Activated CD8-positive, alpha-beta memory T cell treated with anti-CD3 and anti-CD28 coated beads, Interleukin-2, amount 10 ng/mL, durations not matched to agents 7 days and 5 days (primary cell): ENCODE measurements at regions of chr12 and their contacts with region 1.

Region 1: DNA sequence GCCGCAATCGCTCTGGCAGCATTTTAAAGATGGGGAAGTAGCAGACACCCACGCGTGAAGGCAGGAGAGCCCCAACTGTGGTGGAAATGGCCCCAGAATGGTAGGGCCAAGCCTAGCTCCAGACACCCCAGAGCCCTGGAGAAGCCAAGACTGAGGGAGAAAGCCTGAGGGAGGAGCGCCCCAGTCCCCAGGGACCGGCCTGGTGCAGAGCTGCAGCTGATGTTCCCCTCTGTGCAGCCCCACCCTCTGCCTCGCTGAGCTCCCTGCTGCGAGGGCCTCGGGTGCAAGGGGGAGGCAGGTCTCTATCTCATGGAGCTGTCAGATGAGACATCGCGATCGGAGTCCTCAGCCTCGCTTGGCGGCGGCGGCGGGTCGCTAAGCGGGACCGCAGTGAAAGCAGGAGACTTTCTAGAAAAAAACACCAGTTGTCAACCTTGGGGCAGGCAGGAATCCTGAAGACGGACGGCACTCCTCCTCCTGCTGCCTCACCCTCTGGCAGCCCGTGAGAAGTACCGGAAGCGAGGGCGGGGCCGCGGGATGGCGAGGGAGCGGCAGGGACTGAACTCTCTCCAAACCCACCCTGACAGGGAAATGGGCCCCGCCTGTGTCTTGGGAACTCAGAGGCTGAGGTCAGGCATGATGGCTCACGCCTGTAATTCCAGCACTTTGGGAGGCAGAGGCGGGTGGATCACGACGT is 6.0 kb downstream of the GAPDH start:
- DNase-seq: peak; percentile 64
- ATAC-seq: peak; percentile 28
- H3K4me3 Mint-ChIP-seq: peak overlapping the region; percentile 26
- H3K27ac Mint-ChIP-seq: peak overlapping the region; percentile 99
- H3K4me1 Mint-ChIP-seq: peaks cover 54% of the 10 kb centered on the region
- H3K27me3 Mint-ChIP-seq: no peaks in the 10 kb centered on the region

Region 2: DNA sequence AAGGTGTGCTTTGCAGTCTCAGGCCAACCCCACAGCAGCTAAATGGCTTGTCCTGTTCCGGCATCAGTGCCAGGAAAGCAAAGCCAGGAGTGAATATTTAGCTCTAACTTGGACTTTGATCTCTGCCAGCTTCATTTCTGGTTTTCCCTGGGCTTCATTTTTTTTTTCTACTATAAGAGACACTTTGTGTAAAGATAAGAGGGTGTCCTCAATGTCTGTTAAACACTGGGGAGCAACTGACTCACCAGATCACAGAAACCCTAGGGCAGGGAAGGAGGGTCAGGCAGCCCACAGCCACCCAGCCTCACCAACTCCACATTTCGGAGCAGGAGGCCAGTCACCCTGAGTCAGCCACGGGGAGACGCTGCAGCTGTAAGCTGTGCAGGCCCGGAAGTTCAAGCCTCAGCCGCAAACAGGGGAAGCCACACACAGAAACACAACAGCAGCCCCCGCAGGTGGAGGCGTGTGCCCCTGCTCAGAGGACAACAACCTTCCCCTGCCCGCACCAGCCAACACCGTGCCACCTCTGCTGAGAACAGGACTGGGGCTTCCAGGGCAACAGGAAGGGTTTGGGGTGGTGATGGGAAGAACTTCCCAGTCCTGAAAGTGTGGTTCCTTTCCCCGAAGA is 204.8 kb before region 1 on chr12:
- CTCF ChIA-PET with region 1: interaction called, 11 read pairs
- DNase-seq: peak; percentile 95
- ATAC-seq: peak; percentile 62
- H3K4me3 Mint-ChIP-seq: no peak overlapping the region
- H3K27ac Mint-ChIP-seq: no peak overlapping the region
- H3K4me1 Mint-ChIP-seq: peaks cover 53% of the 10 kb centered on the region
- H3K27me3 Mint-ChIP-seq: no peaks in the 10 kb centered on the region

Region 3: DNA sequence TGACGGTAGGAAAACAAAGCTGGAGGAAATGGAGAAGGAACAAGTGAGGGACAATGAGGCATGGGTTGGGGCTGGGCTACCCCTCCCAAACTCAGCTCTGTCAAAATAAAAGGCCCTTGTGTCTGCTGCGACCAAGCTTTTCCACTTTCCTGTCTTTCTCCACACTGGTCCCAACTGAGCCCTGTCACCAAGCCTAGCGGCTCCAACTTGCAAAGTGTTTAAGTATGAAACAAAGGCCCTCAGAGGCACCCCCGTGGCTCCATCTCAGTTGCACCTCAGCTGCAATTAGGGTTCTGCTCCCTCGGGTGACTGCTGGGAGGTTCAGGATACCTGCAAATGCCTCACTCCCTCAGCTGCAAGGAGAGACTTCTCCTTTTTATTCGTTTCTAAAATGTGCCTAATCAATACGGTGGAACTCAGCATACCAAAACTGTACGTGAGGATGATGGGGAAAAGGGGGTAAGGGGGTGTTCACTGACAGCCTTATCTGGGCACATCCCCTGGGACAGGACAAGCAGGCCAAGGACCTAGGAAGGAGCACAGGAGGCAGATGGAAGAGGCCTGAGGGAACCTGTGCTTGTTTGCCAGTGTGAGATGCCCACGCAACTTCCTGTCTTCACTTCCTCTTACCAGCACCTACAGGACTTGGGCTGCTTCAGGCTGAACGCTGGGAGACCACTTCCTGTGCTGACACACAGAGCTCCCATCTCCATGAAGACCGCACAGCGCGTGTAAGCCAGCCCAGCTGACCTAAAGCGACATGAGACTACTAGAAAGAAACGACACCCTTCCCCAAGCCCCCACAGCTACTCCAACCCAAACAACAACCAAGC is 78.7 kb before region 1 on chr12:
- CTCF ChIA-PET with region 1: interaction called, 15 read pairs
- DNase-seq: peak; percentile 97
- ATAC-seq: peak; percentile 82
- H3K4me3 Mint-ChIP-seq: peak overlapping the region; percentile 72
- H3K27ac Mint-ChIP-seq: peak overlapping the region; percentile 98
- H3K4me1 Mint-ChIP-seq: peaks cover 87% of the 10 kb centered on the region
- H3K27me3 Mint-ChIP-seq: no peaks in the 10 kb centered on the region

Region 4: DNA sequence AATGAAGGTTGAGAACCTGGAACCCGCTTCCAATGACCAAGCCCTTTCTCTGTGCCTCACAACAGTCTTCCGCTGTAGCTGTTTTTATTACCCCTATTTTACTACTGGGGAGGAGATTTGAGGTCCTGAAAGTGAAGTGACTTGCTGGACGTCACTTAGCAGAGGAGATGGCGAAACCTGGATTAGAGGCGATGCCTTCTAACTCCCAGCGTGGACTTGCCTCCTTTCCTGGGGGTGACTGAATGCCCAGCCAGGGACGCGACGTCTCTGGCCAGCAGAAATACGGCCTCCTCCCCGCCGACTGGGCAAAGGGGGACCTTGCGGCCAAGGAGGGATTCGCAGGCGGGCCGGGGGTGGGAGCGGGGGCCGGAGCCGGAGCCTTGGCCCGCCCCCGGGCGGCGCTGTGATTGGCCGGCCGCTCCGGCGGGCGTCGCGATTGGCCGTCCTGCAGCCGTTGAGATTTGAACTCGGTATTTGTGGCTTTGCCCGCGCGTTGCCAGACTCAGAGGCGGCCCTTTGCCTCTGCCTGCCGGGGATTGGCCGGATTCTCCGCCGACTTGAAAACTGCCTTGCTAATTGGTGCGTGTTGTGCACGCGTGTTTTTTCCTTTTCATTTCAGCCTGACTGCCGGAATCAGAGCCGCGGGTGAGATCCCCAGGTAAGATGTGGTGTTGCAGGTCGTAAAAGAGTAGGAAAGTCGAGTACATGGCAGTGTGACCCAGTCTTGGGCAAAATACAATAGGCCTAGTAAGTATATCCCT is 46.7 kb before region 1 on chr12 and contains the start of gene NCAPD2:
- CTCF ChIA-PET with region 1: interaction called, 12 read pairs
- DNase-seq: peak; percentile 99
- ATAC-seq: peak; percentile 87
- H3K4me3 Mint-ChIP-seq: peak within 1 kb of the TSS; percentile 91
- H3K27ac Mint-ChIP-seq: peak within 1 kb of the TSS; percentile 95
- H3K4me1 Mint-ChIP-seq: peaks cover 43% of the 10 kb centered on the region
- H3K27me3 Mint-ChIP-seq: no peaks in the 10 kb centered on the region
- total RNA-seq, gene NCAPD2: 173 to 200 TPM

Region 5: GRCh38 chr12:6524648-6525047 is 15.7 kb before region 1 on chr12:
- CTCF ChIA-PET with region 1: interaction called, 10 read pairs
- DNase-seq: no peak
- ATAC-seq: no peak
- H3K4me3 Mint-ChIP-seq: no peak overlapping the region
- H3K27ac Mint-ChIP-seq: no peak overlapping the region
- H3K4me1 Mint-ChIP-seq: peaks cover 3% of the 10 kb centered on the region
- H3K27me3 Mint-ChIP-seq: no peaks in the 10 kb centered on the region

Region 6: GRCh38 chr12:6554168-6555017 is 14.1 kb after region 1 on chr12:
- CTCF ChIA-PET with region 1: interaction called, 140 read pairs
- DNase-seq: peak; percentile 88
- ATAC-seq: peak; percentile 56
- H3K4me3 Mint-ChIP-seq: peak overlapping the region; percentile 84
- H3K27ac Mint-ChIP-seq: peak overlapping the region; percentile 64
- H3K4me1 Mint-ChIP-seq: peaks cover 54% of the 10 kb centered on the region
- H3K27me3 Mint-ChIP-seq: no peaks in the 10 kb centered on the region

Region 7: DNA sequence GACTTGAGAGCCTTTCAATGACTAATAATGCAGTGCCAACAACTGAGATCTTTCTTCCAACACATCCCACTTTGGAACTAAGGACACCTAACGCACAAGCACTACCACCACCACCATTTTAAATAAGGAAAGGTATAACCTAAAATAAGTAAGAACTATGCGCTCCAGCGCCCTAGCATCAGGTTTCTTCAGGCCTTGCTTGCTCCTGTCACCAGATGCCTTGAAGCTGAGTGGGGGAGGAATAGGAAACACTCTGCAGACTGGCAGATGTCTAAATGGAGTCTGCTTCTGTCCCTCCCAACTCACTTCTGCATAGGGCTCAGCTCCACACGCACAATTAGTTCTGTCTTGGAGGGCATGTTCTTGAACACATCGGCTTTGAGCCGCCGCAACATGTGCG is 51.8 kb after region 1 on chr12:
- CTCF ChIA-PET with region 1: no interaction called
- DNase-seq: no peak
- ATAC-seq: no peak
- H3K4me3 Mint-ChIP-seq: no peak overlapping the region
- H3K27ac Mint-ChIP-seq: no peak overlapping the region
- H3K4me1 Mint-ChIP-seq: no peaks in the 10 kb centered on the region
- H3K27me3 Mint-ChIP-seq: no peaks in the 10 kb centered on the region

Region 8: DNA sequence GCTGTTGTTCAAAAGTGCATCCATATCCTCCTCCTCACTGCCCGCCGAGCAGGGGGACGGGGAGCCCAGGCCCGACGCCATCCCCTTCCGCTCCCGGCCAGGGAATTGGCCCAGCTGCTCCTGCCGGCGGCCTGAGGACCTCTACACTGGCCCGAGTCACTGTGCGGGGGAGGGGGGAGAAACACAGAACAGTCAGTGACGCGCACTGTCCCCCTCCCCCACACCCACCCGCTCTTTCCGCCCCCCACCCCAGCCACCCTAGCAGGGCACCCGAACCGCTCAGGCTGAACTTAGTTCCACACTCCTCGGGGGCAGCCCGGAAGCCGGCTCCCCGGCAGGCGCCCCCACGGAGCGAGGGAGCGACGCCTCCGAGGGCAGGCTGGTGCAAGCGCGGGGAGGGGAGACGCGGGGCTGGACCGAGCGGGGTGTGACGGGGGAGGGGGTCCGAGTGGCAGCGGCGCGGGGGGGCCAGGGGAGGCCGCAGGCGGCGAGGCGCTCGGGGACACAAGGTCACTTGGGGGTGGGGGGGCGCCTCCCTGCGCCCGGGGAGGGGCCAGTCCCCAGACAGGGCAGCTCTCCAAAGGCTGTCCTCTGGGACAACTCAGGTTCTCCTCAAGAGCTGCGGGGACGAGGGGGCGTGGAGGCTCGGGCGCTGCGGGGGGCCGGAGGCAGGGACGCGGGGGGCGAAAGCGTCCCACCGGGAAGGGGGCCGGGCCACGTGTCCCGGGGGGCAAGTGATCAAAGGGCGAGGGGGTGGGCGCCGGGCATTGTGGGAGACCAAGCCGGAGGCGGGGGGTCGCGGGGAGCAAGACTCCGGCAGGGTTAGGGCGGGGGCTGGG is 66.2 kb after region 1 on chr12:
- CTCF ChIA-PET with region 1: interaction called, 12 read pairs
- DNase-seq: peak; percentile 72
- ATAC-seq: peak; percentile 24
- H3K4me3 Mint-ChIP-seq: no peak overlapping the region
- H3K27ac Mint-ChIP-seq: peak overlapping the region; percentile 86
- H3K4me1 Mint-ChIP-seq: peaks cover 52% of the 10 kb centered on the region
- H3K27me3 Mint-ChIP-seq: no peaks in the 10 kb centered on the region